ENCODE measurements at regions of chr7 and their contacts with region 1.

Region 1: GRCh38 chr7:115910541-115911164 is 119.9 kb downstream of the TFEC start:
- DNase-seq: no peak
- CTCF ChIP-seq: peak; percentile 31

Region 2: DNA sequence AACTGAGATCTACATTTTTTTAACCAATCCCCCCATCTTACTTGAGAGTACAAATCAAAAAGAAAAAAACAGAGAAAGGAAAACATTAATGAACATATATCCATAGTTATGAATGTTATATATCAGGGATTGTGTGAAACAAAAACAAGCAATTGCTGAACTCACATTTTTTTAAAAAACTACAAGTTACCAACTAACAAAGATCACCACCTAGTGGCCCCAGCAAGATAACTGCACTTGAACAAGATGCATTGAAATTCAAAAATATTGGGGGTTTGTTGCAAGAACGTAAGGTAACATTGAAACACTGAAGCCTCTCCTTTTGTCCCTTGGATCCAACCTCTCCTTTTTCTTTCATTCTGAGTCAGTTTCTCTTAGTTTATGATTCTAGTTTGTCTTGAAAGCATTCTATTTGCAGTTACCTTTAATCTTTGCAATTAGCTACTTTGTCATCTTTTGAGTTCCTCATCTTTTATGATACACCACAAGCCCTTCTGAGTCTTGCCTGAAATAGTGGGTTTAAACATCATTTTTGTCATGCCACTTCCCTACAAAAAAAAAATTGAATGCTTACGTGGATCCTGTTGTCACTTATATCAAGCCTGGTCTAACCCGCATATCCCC is 212.4 kb after region 1 on chr7:
- in situ Hi-C with region 1: loop called (anchors 25 kb)
- DNase-seq: peak; percentile 13
- CTCF ChIP-seq: peak; percentile 48